ENCODE measurements at regions of chr2 and their contacts with region 1.

Region 1: GRCh38 chr2:12856934-12857601 is 140.3 kb downstream of the TRIB2 start:
- DNase-seq: peak; percentile 81
- H3K4me3 ChIP-seq: peak overlapping the region in 1 of 3 experiments; percentile 23
- H3K27ac ChIP-seq: peak overlapping the region; percentile 91
- H3K4me1 ChIP-seq: peaks cover 27% of the 10 kb centered on the region
- H3K27me3 ChIP-seq: no peaks in the 10 kb centered on the region
- CTCF ChIP-seq: no peak
- POLR2A ChIP-seq: peak; percentile 38

Region 2: GRCh38 chr2:12555012-12555645 is 301.9 kb before region 1 on chr2:
- CTCF ChIA-PET with region 1: no interaction called
- POLR2A ChIA-PET with region 1: no interaction called
- dilution Hi-C with region 1: no loop called
- intact Hi-C with region 1: loop called (anchors 5 kb)
- DNase-seq: peak; percentile 85
- H3K4me3 ChIP-seq: no peak overlapping the region
- H3K27ac ChIP-seq: no peak overlapping the region
- H3K4me1 ChIP-seq: peaks cover 23% of the 10 kb centered on the region
- H3K27me3 ChIP-seq: no peaks in the 10 kb centered on the region
- CTCF ChIP-seq: no peak
- POLR2A ChIP-seq: no peak

Region 3: DNA sequence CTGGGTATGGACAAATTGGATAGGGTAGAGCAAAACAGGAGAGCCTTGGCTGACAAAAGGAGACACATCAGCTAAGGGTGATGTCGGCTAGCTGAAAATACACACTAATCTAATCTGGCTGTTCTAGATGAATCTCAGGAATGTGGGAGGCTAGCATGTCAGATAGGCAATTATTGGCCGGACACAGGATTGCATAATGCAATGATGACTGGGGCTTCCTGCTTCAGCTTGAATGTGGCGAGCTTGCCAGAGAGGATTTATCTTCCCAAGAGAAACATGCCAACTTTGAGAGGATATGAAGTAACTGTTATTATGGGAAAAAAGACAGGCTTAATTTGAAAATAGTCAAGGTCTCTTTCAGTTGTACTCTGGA is 38.0 kb before region 1 on chr2:
- CTCF ChIA-PET with region 1: interaction called, 10 read pairs
- POLR2A ChIA-PET with region 1: no interaction called
- dilution Hi-C with region 1: no loop called
- intact Hi-C with region 1: loop called (anchors 1 kb)
- DNase-seq: peak; percentile 97
- H3K4me3 ChIP-seq: peak overlapping the region in 1 of 3 experiments; percentile 41
- H3K27ac ChIP-seq: peak overlapping the region; percentile 96
- H3K4me1 ChIP-seq: peaks cover 32% of the 10 kb centered on the region
- H3K27me3 ChIP-seq: no peaks in the 10 kb centered on the region
- CTCF ChIP-seq: no peak
- POLR2A ChIP-seq: peak; percentile 52

Region 4: GRCh38 chr2:12824351-12824777 is 32.7 kb before region 1 on chr2:
- CTCF ChIA-PET with region 1: interaction called, 10 read pairs
- POLR2A ChIA-PET with region 1: no interaction called
- dilution Hi-C with region 1: no loop called
- intact Hi-C with region 1: loop called (anchors 1 kb)
- DNase-seq: peak; percentile 32
- H3K4me3 ChIP-seq: no peak overlapping the region
- H3K27ac ChIP-seq: no peak overlapping the region
- H3K4me1 ChIP-seq: peaks cover 24% of the 10 kb centered on the region
- H3K27me3 ChIP-seq: no peaks in the 10 kb centered on the region
- CTCF ChIP-seq: no peak
- POLR2A ChIP-seq: no peak

Region 5: GRCh38 chr2:12884713-12885282 is 27.7 kb after region 1 on chr2:
- CTCF ChIA-PET with region 1: interaction called, 3 read pairs
- POLR2A ChIA-PET with region 1: no interaction called
- dilution Hi-C with region 1: no loop called
- intact Hi-C with region 1: loop called (anchors 1 kb)
- DNase-seq: peak; percentile 59
- H3K4me3 ChIP-seq: no peak overlapping the region
- H3K27ac ChIP-seq: peak overlapping the region; percentile 70
- H3K4me1 ChIP-seq: peaks cover 17% of the 10 kb centered on the region
- H3K27me3 ChIP-seq: no peaks in the 10 kb centered on the region
- CTCF ChIP-seq: no peak
- POLR2A ChIP-seq: no peak

Region 6: GRCh38 chr2:12982149-12982584 is 125.1 kb after region 1 on chr2:
- CTCF ChIA-PET with region 1: no interaction called
- POLR2A ChIA-PET with region 1: no interaction called
- dilution Hi-C with region 1: no loop called
- intact Hi-C with region 1: loop called (anchors 2 kb)
- DNase-seq: peak; percentile 90
- H3K4me3 ChIP-seq: no peak overlapping the region
- H3K27ac ChIP-seq: peak overlapping the region; percentile 50
- H3K4me1 ChIP-seq: peaks cover 28% of the 10 kb centered on the region
- H3K27me3 ChIP-seq: no peaks in the 10 kb centered on the region
- CTCF ChIP-seq: no peak
- POLR2A ChIP-seq: no peak

Region 7: DNA sequence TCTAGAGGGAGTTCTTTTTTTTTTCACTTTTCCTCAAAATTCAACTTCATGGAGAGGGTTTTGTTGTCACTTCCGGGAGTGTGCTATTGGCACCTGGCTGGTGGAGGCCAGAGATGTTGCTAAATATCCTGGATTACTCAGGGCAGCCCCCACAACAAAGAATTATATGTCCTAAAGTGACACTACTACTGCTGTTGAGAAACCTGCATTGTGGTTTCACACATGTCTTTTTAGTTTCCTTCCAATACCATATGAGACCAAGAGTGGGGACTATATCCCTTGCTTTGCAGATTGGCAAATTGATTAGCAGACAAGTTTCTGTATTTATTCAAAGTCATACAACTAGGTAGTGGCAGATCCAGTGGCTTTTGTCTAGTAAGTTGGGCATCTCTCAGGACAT is 686.5 kb after region 1 on chr2:
- CTCF ChIA-PET with region 1: no interaction called
- POLR2A ChIA-PET with region 1: no interaction called
- dilution Hi-C with region 1: no loop called
- intact Hi-C with region 1: no loop called
- DNase-seq: no peak
- H3K4me3 ChIP-seq: no peak overlapping the region
- H3K27ac ChIP-seq: no peak overlapping the region
- H3K4me1 ChIP-seq: no peaks in the 10 kb centered on the region
- H3K27me3 ChIP-seq: no peaks in the 10 kb centered on the region
- CTCF ChIP-seq: no peak
- POLR2A ChIP-seq: no peak

Measured in endothelial cell of umbilical vein (primary cell).